ENCODE measurements at regions of chr1 and their contacts with region 1.

Region 1: GRCh38 chr1:18618546-18619466 is 11.8 kb upstream of the PAX7 start:
- DNase-seq: no peak
- H3K4me3 ChIP-seq: no peak overlapping the region
- H3K27ac ChIP-seq: no peak overlapping the region
- H3K4me1 ChIP-seq: no peaks in the 10 kb centered on the region
- H3K27me3 ChIP-seq: peaks cover 0 to 53% of the 10 kb centered on the region in 2 donors
- CTCF ChIP-seq: no peak
- POLR2A ChIP-seq: no peak

Region 2: DNA sequence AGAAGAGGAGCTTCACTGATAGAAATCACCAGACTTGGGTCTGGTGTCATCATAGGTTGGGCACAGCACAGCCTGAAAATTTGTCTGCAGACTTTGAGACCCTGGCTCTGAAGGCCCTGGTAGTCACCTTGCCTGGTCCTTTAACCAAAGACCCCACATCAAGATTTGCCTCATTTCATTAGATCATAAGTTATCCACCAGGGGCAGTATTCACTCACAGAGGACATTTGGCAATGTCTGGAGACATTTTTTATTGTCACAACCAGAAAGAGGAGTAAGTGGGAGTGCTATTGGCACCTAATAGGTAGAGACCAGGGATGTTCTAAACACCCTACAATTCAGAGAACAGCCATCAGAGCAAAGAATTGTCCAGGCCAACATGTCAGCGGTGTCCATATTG is 10.3 kb before region 1 on chr1:
- intact Hi-C with region 1: loop called (anchors 1 kb)
- DNase-seq: no peak
- H3K4me3 ChIP-seq: no peak overlapping the region
- H3K27ac ChIP-seq: no peak overlapping the region
- H3K4me1 ChIP-seq: no peaks in the 10 kb centered on the region
- H3K27me3 ChIP-seq: peaks cover 0 to 24% of the 10 kb centered on the region in 2 donors
- CTCF ChIP-seq: no peak
- POLR2A ChIP-seq: no peak

Region 3: GRCh38 chr1:19029191-19030105 is 410.6 kb after region 1 on chr1:
- intact Hi-C with region 1: loop called (anchors 10 kb)
- DNase-seq: no peak
- H3K4me3 ChIP-seq: no peak overlapping the region
- H3K27ac ChIP-seq: no peak overlapping the region
- H3K4me1 ChIP-seq: no peaks in the 10 kb centered on the region
- H3K27me3 ChIP-seq: no peaks in the 10 kb centered on the region
- CTCF ChIP-seq: no peak
- POLR2A ChIP-seq: no peak

Measured in breast epithelium (tissue), 4 donors.